ENCODE measurements at regions of chr14 and their contacts with region 1.

Region 1: DNA sequence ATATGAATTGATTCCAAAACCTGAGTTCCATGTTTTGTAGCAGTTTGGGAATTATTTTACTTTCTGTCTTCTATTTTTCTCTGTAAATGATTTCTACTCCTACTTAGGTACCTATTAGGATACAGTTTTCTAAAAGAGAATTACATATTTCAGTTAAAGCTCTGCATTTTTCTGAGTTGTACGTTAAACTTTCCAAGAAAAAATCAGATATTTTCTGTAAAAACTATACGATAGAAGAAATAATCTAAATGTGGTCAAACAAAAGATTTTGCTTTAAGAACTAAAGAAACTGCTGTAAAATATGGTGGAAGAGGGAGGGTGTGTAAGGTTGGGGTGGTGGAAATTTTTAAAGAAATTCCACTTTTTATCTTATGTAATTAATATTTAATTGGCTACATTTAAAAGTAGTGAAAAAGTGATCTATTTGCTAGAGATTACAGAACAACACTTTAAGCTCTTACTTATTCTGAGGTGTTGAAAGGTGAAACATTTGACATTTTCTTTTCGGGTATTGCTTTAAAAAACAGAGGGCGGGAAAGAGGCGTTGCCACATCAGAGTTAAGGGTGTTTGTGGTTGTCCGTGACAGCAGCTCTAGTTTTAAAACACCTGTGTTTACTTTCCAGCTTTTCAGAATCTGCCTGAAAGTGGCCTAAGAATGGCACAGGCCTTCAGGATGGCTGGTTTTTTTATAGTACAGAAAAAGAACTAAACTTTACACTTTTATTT is 187.3 kb downstream of the MIPOL1 start:
- DNase-seq: no peak
- H3K4me3 ChIP-seq: no peak overlapping the region
- CTCF ChIP-seq: no peak

Region 2: GRCh38 chr14:37436494-37436893 is 51.5 kb after region 1 on chr14:
- in situ Hi-C with region 1: loop called (anchors 5 kb)
- DNase-seq: no peak
- H3K4me3 ChIP-seq: no peak overlapping the region
- CTCF ChIP-seq: no peak

Region 3: GRCh38 chr14:37453985-37454384 is 69.0 kb after region 1 on chr14:
- in situ Hi-C with region 1: no loop called
- DNase-seq: no peak
- H3K4me3 ChIP-seq: no peak overlapping the region
- CTCF ChIP-seq: no peak

Measured in astrocyte of the cerebellum (primary cell).